ENCODE measurements at regions of chr1 and their contacts with region 1.

Region 1: DNA sequence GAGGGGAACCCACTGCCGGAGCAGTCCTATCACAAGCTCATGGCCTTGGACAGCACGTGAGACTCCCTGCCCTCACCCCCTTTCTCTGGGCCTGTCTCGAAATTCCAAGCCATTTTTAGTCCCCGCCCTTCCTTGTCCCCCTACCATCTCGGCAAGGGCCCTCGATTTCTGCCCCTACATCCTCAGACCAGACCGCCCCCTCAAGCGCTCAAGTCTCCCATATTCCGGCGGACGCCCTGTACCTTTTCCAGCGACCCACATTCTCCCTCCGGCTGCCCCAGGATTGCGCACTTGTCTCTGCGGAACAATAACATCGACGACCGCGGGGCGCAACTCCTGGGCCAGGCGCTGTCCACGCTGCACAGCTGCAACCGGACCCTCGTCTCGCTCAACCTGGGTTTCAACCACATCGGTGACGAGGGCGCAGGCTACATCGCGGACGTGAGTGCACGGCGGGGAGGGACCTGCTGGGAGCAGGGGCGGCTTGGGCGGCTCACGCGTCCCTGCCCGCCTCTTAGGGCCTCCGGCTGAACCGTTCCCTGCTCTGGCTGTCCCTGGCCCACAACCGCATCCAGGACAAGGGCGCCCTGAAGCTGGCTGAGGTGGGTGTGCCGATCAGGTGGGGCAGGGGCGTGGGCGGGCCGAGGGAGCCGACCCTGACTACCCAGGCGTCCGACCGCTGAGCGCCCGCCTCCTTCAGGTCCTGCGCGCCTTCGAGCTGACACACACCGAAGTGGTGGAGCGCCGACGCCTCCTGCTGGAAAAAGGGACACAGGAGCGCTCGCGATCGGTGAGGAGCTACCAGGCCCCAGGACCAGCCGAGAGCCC is 7.0 kb downstream of the LRRC71 start:
- DNase-seq: peak; percentile 75
- ATAC-seq: peak; percentile 79
- H3K4me3 Mint-ChIP-seq: no peak overlapping the region
- H3K27ac Mint-ChIP-seq: no peak overlapping the region
- H3K4me1 Mint-ChIP-seq: peaks cover 33% of the 10 kb centered on the region
- H3K27me3 Mint-ChIP-seq: peaks cover 95% of the 10 kb centered on the region

Region 2: DNA sequence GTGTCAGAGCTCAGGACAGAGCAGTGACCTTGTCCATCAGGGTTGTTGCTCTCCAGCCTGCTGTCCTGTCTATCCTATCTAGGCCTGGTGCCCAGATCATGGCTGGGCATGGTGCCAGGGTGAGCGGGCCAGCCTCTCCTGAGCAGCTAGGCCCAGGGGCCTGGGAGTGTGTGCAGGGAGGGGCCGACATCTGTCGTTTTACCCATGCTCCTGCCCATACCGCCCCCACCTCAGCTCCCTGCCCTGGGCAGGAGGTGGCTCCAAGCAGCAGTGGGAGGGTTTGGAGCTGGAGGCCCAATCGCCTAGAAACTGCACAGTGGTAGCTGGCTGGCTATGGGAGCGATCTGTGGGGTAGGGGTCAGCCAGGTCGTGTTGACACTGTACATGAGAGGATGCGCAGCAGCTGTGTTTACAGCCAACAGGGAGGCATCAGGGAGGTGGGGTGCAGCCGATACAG is 75.0 kb before region 1 on chr1:
- CTCF ChIA-PET with region 1: interaction called, 10 read pairs
- DNase-seq: no peak
- ATAC-seq: no peak
- H3K4me3 Mint-ChIP-seq: no peak overlapping the region
- H3K27ac Mint-ChIP-seq: no peak overlapping the region
- H3K4me1 Mint-ChIP-seq: peaks cover 15% of the 10 kb centered on the region
- H3K27me3 Mint-ChIP-seq: peaks cover 27% of the 10 kb centered on the region

Region 3: GRCh38 chr1:156910309-156910782 is 17.1 kb before region 1 on chr1:
- CTCF ChIA-PET with region 1: interaction called, 56 read pairs
- DNase-seq: peak; percentile 65
- ATAC-seq: peak; percentile 66
- H3K4me3 Mint-ChIP-seq: no peak overlapping the region
- H3K27ac Mint-ChIP-seq: no peak overlapping the region
- H3K4me1 Mint-ChIP-seq: no peaks in the 10 kb centered on the region
- H3K27me3 Mint-ChIP-seq: peaks cover 21% of the 10 kb centered on the region